HepG2 (cell line): ENCODE measurements at regions of chr1 and their contacts with region 1.

Region 1: DNA sequence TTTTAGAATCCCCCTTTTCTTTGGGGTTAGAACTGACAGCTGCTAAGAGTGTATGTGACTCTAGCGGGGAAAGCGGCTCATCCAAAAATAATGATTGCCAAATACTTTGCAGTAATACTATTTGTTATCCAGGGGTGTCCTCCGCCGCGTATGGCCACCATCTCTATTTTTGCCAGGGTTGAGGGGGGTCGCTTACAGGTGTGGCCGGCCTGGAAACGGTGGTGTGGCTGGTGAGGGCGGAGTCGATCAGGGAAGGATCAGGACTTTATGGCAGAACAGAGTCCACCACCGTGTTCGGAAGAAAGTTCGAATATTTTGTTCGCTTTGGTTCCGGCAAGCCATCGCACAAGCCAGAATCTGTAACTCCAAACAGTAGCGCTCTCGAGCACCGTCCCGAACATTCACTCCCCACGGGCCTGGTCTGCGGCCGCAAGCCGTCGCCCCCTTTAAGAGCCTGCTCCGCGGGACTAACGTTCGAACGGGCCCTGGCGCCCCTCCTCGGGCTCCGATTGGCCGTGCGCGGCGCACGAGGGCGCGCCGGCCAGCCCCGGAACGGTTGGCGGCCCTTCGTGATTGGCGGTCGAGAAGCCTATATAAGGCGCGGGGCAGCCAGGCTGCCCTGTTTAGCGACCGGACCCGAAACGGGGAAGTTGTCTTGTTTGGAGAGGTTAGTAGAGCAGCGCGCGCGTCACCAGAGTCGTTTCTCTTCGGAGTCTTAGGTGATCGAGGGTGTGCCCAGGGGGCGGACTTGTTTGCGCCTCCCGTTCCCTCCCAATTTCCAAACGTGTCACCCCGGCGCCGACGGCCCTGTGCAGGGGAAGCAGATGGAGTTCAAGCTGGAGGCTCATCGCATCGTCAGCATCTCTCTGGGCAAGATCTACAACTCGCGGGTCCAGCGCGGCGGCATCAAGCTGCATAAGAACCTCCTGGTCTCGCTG is at the start of gene IER5:
- DNase-seq: peak; percentile 89
- ATAC-seq: peak; percentile 90
- H3K4me3 ChIP-seq: peak within 1 kb of the TSS; percentile 68 to 88 (median 79)
- H3K27ac ChIP-seq: peak within 1 kb of the TSS; percentile 39
- H3K4me1 ChIP-seq: peaks cover 52% of the 10 kb centered on the region
- H3K27me3 ChIP-seq: no peaks in the 10 kb centered on the region; a peak in 2 of 5 replicates
- CTCF ChIP-seq: 0 out of 2 replicates have a peak, but pooled peaks have one; percentile 5
- EP300 ChIP-seq: no peak
- POLR2A ChIP-seq: peak; percentile 100
- RAD21 ChIP-seq: peak; percentile 41; the same call in 1 of the 2 replicates
- total RNA-seq, gene IER5: 3.0 and 3.5 TPM in 2 replicates

Region 2: GRCh38 chr1:180881806-180882509 is 206.4 kb before region 1 on chr1:
- CTCF ChIA-PET with region 1: no interaction called
- POLR2A ChIA-PET with region 1: interaction called, 3 read pairs
- in situ Hi-C with region 1: no loop called
- intact Hi-C with region 1: loop called (anchors 5 kb)
- DNase-seq: peak; percentile 25
- ATAC-seq: peak; percentile 54; the same call in 2 of the 3 replicates
- H3K4me3 ChIP-seq: no peak overlapping the region
- H3K27ac ChIP-seq: no peak overlapping the region
- H3K4me1 ChIP-seq: no peaks in the 10 kb centered on the region
- H3K27me3 ChIP-seq: no peaks in the 10 kb centered on the region; a peak in 1 of 5 replicates
- CTCF ChIP-seq: peak; percentile 71
- EP300 ChIP-seq: no peak
- POLR2A ChIP-seq: no peak
- RAD21 ChIP-seq: peak; percentile 42; the same call in 1 of the 2 replicates

Region 3: DNA sequence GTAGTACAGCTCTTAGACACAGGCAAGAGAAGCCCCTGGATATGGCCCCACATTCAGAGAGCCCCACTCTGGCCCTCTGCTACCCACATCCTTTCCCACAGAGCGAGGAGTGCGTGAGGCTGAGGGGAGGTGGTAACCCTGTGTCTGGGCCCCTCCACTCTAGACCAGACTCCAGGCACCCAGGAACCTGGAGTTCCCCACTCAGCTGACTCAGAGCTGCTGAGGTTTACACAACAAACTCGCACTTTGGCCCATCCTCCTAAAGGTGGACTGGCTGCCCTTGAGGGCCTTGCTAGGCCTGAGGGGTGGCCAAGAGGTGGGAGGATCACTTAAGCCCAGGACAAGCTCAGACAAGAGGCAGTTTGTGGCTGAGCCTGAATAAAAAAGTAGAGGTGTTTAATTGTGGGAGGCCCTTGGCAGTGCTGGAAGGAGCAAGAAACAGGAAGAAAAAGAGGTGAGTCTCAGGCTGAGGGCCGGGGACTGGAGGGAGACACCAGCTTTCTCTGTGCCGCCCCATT is 43.8 kb before region 1 on chr1:
- CTCF ChIA-PET with region 1: no interaction called
- POLR2A ChIA-PET with region 1: interaction called, 36 read pairs
- in situ Hi-C with region 1: no loop called
- intact Hi-C with region 1: loop called (anchors 2 kb)
- DNase-seq: peak; percentile 82
- ATAC-seq: peak; percentile 96
- H3K4me3 ChIP-seq: peak overlapping the region in 1 of 3 experiments; percentile 40; a peak in 2 of 6 replicates
- H3K27ac ChIP-seq: peak overlapping the region; percentile 57
- H3K4me1 ChIP-seq: peaks cover 51% of the 10 kb centered on the region
- H3K27me3 ChIP-seq: no peaks in the 10 kb centered on the region
- CTCF ChIP-seq: no peak
- EP300 ChIP-seq: peak in 1 of 2 experiments; percentile 67; a peak in 3 of 4 replicates
- POLR2A ChIP-seq: 0 out of 4 replicates have a peak, but pooled peaks of 1 of the 2 experiments have one; percentile 22
- RAD21 ChIP-seq: no peak

Region 4: DNA sequence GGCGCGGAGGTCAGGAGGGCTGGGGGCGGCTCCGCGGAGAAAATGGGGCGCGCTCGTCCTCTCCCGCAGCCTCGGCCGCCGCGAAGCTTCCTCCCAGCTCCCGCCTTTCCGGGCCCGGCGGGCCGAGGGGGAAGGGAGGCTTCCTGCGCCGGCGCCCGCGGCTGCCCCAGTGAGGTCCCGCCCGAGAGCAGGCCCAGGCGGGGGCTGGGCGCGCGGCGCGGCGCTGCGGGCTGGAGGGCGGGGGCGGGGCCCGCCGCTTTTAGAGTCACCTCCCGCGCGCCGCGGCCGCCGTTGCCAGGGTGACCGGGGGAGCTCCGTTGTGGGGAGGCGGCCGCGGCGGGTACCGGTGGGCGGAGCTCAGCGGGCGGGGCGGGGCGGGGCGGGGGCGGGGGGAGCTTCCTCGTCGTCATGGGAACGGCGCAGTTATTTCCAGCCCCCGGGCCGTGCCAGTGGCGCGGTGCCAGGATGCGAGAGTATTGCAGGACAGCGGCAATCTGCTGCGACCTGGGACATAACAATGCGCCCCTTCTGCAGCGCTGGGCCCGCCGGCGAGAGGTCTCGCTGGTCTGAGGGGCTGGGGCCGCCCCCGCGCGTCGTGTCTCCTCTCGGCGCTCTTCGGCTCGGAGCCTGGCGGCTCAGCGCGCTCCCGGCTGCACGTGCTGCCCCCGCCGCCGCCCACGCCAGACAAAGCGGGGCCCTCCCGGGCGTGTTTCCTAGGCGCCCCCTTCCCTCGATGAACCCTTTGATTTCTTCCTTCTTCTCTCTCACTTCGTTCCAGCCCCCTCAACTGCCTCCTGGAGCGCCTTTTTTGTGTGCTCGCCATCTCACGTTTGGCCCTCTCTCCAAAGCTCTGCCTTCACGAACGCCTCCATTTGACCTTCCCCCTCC is 17.0 kb after region 1 on chr1:
- CTCF ChIA-PET with region 1: no interaction called
- POLR2A ChIA-PET with region 1: interaction called, 57 read pairs
- in situ Hi-C with region 1: no loop called
- intact Hi-C with region 1: loop called (anchors 2 kb)
- DNase-seq: peak; percentile 74
- ATAC-seq: peak; percentile 80
- H3K4me3 ChIP-seq: peak overlapping the region; percentile 66 to 80 (median 73)
- H3K27ac ChIP-seq: no peak overlapping the region
- H3K4me1 ChIP-seq: peaks cover 95% of the 10 kb centered on the region
- H3K27me3 ChIP-seq: peaks cover 0 to 14% of the 10 kb centered on the region in 2 experiments; a peak in 2 of 5 replicates
- CTCF ChIP-seq: no peak
- EP300 ChIP-seq: no peak
- POLR2A ChIP-seq: no peak
- RAD21 ChIP-seq: 0 out of 2 replicates have a peak, but pooled peaks have one; percentile 16

Region 5: GRCh38 chr1:181128592-181129497 is 40.5 kb after region 1 on chr1:
- CTCF ChIA-PET with region 1: no interaction called
- POLR2A ChIA-PET with region 1: interaction called, 10 read pairs
- in situ Hi-C with region 1: no loop called
- intact Hi-C with region 1: no loop called
- DNase-seq: no peak
- ATAC-seq: no peak
- H3K4me3 ChIP-seq: no peak overlapping the region
- H3K27ac ChIP-seq: no peak overlapping the region
- H3K4me1 ChIP-seq: peaks cover 58% of the 10 kb centered on the region
- H3K27me3 ChIP-seq: peaks cover 1 to 4% of the 10 kb centered on the region in 2 experiments; a peak in 1 of 5 replicates
- CTCF ChIP-seq: no peak
- EP300 ChIP-seq: no peak
- POLR2A ChIP-seq: no peak
- RAD21 ChIP-seq: no peak